Heart left ventricle (tissue), 16 donors: ENCODE measurements at regions of chr2 and their contacts with region 1.

Region 1: GRCh38 chr2:127701193-127701650 is at the start of gene SFT2D3:
- DNase-seq: peak; percentile 93 to 95 (median 95)
- ATAC-seq: peak; percentile 88 to 94 (median 88)
- H3K4me3 ChIP-seq: peak within 1 kb of the TSS; percentile 39 to 88 (median 69)
- H3K27ac ChIP-seq: peak within 1 kb of the TSS; percentile 90 to 99 (median 96)
- H3K4me1 ChIP-seq: peaks cover 0 to 45% (median 38%) of the 10 kb centered on the region in 12 donors
- H3K27me3 ChIP-seq: no peaks in the 10 kb centered on the region
- CTCF ChIP-seq: no peak
- POLR2A ChIP-seq: peak in 1 of 2 donors; percentile 90
- total RNA-seq, gene SFT2D3: 2.4 to 5.2 (median 3.7) TPM

Region 2: GRCh38 chr2:127516031-127516762 is 185.0 kb before region 1 on chr2:
- intact Hi-C with region 1: loop called in 5 of 10 experiments (anchors 10 kb)
- DNase-seq: peak; percentile 80 to 92 (median 84)
- ATAC-seq: peak; percentile 83 to 88 (median 85)
- H3K4me3 ChIP-seq: peak overlapping the region in 2 of 12 donors; percentile 4 to 11
- H3K27ac ChIP-seq: peak overlapping the region in 11 of 12 donors; percentile 58 to 89 (median 72)
- H3K4me1 ChIP-seq: peaks cover 0 to 59% (median 44%) of the 10 kb centered on the region in 12 donors
- H3K27me3 ChIP-seq: no peaks in the 10 kb centered on the region
- CTCF ChIP-seq: no peak
- POLR2A ChIP-seq: no peak

Region 3: DNA sequence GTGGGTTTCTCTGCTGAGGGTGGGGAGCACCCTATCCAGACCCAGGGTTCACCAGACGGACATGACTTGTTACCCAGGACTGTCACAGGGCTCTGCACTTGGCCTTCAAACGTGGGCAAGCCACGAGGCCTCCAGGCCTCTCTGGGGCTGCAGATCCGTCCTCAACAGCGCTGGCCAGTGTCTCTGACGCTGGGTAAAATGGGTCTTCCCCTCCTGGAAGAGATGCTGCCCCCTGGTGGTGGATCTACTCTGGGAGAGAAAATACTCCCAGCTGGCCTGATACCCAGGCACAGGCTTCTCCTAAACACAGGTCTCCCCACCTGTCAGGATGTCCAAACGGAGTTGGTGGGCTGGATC is 51.6 kb before region 1 on chr2:
- intact Hi-C with region 1: loop called in 3 of 10 experiments (anchors 5 to 10 kb)
- DNase-seq: peak; percentile 84 to 93 (median 85)
- ATAC-seq: peak; percentile 8 to 38 (median 18)
- H3K4me3 ChIP-seq: no peak overlapping the region
- H3K27ac ChIP-seq: peak overlapping the region; percentile 50 to 98 (median 84)
- H3K4me1 ChIP-seq: peaks cover 29 to 91% (median 80%) of the 10 kb centered on the region in 12 donors
- H3K27me3 ChIP-seq: no peaks in the 10 kb centered on the region
- CTCF ChIP-seq: peak; percentile 73 to 93 (median 88)
- POLR2A ChIP-seq: no peak

Region 4: GRCh38 chr2:127735537-127736399 is 34.5 kb after region 1 on chr2:
- intact Hi-C with region 1: no loop called
- DNase-seq: no peak
- ATAC-seq: no peak
- H3K4me3 ChIP-seq: no peak overlapping the region
- H3K27ac ChIP-seq: peak overlapping the region in 1 of 12 donors; percentile 79
- H3K4me1 ChIP-seq: peaks cover 0 to 23% (median 12%) of the 10 kb centered on the region in 12 donors
- H3K27me3 ChIP-seq: no peaks in the 10 kb centered on the region
- CTCF ChIP-seq: no peak
- POLR2A ChIP-seq: no peak

Region 5: GRCh38 chr2:127810619-127811396 is 109.6 kb after region 1 on chr2 and contains the start of gene WDR33:
- intact Hi-C with region 1: loop called in 4 of 10 experiments (anchors 2 to 5 kb)
- DNase-seq: peak; percentile 90 to 95 (median 94)
- ATAC-seq: peak; percentile 98 to 99 (median 99)
- H3K4me3 ChIP-seq: peak within 1 kb of the TSS; percentile 54 to 97 (median 92)
- H3K27ac ChIP-seq: peak within 1 kb of the TSS; percentile 84 to 96 (median 88)
- H3K4me1 ChIP-seq: peaks cover 0 to 49% (median 40%) of the 10 kb centered on the region in 12 donors
- H3K27me3 ChIP-seq: no peaks in the 10 kb centered on the region
- CTCF ChIP-seq: peak in 4 of 12 donors; percentile 18 to 31 (median 25)
- POLR2A ChIP-seq: peak in 1 of 2 donors; percentile 60
- total RNA-seq, gene WDR33: 16.4 to 49.9 (median 42.0) TPM

Region 6: GRCh38 chr2:127857265-127857808 is 156.1 kb after region 1 on chr2:
- intact Hi-C with region 1: loop called in 4 of 10 experiments (anchors 5 to 10 kb)
- DNase-seq: no peak
- ATAC-seq: no peak
- H3K4me3 ChIP-seq: peak overlapping the region; percentile 59 to 96 (median 84)
- H3K27ac ChIP-seq: peak overlapping the region in 10 of 12 donors; percentile 44 to 87 (median 76)
- H3K4me1 ChIP-seq: peaks cover 0 to 54% (median 36%) of the 10 kb centered on the region in 12 donors
- H3K27me3 ChIP-seq: no peaks in the 10 kb centered on the region
- CTCF ChIP-seq: no peak
- POLR2A ChIP-seq: no peak